Left lung (tissue), 14 donors: ENCODE measurements at regions of chr11 and their contacts with region 1.

Region 1: DNA sequence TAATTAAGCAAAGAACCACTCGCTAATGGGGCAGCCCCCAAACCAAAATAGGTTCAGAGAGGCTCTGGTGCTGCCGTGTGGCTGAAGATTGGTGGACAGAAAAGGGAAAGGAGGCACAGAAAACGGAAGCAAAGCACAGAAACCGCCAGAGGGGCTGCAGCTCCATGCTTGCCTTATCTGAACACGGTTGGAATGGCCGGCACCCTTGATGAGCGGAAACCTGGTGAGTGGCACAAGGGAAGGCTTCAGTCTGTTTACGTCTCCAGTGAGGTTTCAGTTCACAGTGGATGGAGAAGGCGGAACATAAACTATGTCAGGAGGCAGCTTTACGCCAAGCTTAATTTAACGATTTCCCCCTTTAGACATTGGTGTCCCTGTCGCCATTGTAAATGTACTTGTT is 5.2 kb upstream of the PRR33 start:
- DNase-seq: peak in 2 of 4 donors; percentile 31
- ATAC-seq: no peak
- H3K4me3 ChIP-seq: peak overlapping the region in 1 of 2 donors; percentile 13
- H3K27ac ChIP-seq: no peak overlapping the region
- H3K4me1 ChIP-seq: peaks cover 0 to 7% of the 10 kb centered on the region in 2 donors
- H3K27me3 ChIP-seq: peaks cover 0 to 4% of the 10 kb centered on the region in 2 donors
- CTCF ChIP-seq: no peak

Region 2: DNA sequence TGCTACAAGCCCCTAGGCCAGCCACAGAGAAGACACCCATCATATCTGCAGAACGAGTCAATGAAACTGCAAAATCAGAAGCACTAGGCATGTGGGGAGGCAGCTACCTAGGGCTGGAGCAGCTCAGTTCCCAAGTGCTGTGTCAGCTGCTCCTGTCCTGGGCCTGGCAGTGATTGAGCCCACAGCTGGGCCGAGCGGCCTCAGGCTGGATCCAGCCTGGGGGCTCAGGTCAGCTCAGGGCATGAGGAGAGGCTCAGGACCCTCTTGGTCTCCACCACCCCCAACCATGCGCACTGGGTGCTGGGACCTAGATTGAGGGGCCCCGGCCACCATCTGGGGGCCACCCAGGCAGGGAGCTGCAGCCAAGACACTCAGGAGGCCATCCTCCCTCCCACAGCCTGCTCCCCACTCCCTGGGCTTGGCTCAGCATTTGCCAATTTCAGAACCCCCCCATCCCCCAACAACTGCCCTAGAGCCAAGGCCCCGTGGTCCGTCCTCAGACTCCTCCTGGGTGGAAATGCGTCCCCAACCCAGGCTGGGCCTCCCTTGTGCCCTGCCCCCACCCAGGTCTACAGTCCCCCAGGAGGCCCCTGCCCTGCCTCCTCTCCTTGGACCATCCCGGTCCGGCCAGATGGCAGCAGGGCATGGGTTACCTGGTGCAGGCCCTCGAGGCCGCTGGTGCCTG is 20.2 kb after region 1 on chr11:
- intact Hi-C with region 1: loop called in 1 of 2 experiments (anchors 1 kb)
- DNase-seq: peak in 3 of 4 donors; percentile 29 to 59 (median 58)
- ATAC-seq: no peak
- H3K4me3 ChIP-seq: no peak overlapping the region
- H3K27ac ChIP-seq: no peak overlapping the region
- H3K4me1 ChIP-seq: no peaks in the 10 kb centered on the region
- H3K27me3 ChIP-seq: peaks cover 0 to 12% of the 10 kb centered on the region in 2 donors
- CTCF ChIP-seq: no peak

Region 3: DNA sequence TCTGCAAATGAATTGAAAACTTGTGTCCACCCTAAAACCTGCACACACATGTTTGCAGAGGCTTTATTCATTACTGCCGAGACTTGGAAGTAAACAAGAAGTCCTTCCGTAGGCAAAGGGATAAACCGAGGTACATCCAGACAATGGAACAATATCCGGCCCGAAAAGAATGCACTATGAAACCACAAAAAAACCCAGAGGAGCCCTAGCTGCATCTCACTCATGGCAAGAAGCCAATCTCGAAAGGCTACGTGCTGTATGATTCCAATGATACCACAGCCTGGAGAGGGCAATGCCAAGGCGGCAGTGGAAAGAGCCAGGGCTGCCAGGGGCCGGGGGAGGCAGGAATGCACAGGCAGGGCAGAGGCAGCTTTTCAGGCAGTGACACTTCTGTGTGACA is 47.1 kb after region 1 on chr11:
- intact Hi-C with region 1: loop called in 1 of 2 experiments (anchors 5 kb)
- DNase-seq: peak in 2 of 4 donors; percentile 25 to 47
- ATAC-seq: no peak
- H3K4me3 ChIP-seq: no peak overlapping the region
- H3K27ac ChIP-seq: no peak overlapping the region
- H3K4me1 ChIP-seq: peaks cover 2 to 3% of the 10 kb centered on the region in 2 donors
- H3K27me3 ChIP-seq: peaks cover 0 to 3% of the 10 kb centered on the region in 2 donors
- CTCF ChIP-seq: no peak

Region 4: DNA sequence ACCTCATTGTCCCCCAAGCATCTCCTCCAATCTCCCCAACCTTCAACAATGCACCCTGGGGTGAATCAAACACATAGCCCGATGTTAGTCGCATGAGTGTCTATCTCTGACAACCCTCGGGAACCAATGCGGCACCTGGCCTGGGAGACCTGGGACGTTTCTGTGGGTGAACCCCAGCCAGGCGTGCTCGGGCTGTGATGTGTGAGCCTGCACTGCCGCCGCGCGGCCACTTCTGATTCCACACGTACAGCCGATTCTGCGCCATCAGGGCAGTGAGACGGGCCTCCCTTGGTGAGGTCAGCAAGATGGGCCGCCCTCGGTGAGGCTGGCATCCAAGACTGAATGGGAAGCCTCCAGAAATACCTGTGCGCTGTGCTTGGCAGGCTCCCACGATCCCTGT is 105.9 kb after region 1 on chr11:
- intact Hi-C with region 1: no loop called
- DNase-seq: no peak
- ATAC-seq: peak; percentile 72
- H3K4me3 ChIP-seq: no peak overlapping the region
- H3K27ac ChIP-seq: no peak overlapping the region
- H3K4me1 ChIP-seq: no peaks in the 10 kb centered on the region
- H3K27me3 ChIP-seq: no peaks in the 10 kb centered on the region
- CTCF ChIP-seq: no peak

Region 5: DNA sequence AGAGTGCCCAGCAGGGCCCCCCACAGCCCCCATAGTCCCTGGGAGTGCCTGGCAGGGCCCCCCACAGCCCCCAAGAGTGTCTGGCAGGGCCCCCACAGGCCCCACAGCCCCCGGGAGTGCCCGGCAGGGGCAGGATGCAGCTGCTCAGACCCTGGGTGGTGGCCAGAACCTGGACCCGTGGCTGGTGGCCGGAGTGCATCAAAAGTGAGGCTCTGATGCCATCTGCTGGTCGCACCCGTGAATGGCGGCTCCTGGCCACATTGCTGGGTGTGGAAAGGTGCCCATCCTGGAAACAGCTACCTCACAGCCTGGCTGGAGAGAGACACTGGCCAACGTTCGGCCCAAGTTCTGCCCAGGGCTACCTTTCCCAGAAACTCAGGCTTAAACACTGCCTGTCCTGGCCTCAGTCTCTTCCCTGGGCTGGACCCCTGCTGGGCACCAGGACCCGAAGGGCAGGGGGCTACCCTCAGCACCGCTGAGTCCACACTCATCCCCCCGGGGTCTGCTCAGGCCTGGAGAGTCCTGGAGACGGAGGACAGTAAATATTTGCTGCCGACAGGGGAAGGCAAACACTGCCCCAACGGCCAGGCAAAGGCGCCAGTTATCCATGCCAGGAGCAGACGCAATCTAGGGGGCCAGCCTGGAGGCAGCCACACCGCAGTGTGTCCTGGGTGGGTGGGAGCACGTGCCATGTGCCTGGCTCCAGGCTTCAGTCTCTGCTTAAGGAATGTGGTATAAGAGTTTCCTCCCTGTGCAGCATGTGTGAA is 259.7 kb after region 1 on chr11:
- intact Hi-C with region 1: no loop called
- DNase-seq: peak in 3 of 4 donors; percentile 60 to 91 (median 63)
- ATAC-seq: peak; percentile 70
- H3K4me3 ChIP-seq: no peak overlapping the region
- H3K27ac ChIP-seq: no peak overlapping the region
- H3K4me1 ChIP-seq: peaks cover 3% of the 10 kb centered on the region in 2 donors
- H3K27me3 ChIP-seq: peaks cover 0 to 70% of the 10 kb centered on the region in 2 donors
- CTCF ChIP-seq: peak; percentile 67 to 87